Naive thymus-derived CD4-positive, alpha-beta T cell (primary cell): ENCODE measurements at regions of chr17 and their contacts with region 1.

Region 1: DNA sequence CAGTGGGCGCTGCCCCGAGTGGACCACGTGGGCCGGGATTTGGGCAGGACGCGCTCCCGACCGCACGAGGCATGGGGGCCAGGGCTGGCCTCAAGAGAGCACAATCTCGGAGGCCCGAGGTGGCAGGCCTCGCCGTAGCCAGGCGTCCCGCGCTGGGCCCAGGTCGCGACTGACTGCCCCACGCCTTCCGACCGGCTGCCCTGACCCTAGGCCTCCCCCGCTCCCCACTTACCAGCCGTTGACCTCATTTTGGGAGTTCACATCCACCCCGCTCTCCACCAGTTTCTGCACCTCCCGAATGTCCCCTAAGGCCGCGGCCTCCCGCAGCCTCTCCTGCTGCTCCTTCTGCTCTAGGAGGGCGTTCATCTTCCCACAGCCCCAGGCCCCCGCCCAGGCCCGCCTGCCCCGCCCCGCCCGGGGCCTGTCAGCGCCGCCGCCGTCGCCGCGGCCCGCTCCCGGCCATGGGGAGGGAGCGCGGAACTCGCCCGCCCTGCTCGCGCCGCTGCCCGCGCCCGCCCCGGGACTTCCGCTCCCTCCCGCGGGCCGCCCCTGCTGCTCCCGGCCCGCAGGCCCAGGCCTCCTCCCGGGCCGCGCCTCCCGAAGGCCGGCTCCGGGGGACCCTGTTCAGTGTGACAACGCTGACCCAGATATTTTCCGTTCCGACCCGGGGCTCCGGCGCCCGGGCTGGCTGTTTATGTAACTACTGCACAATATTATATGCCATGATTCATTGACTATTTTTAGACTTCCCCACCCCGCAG is at the start of gene ANKRD40:
- DNase-seq: peak; percentile 87 to 95 (median 91)
- ATAC-seq: peak; percentile 94
- H3K4me3 ChIP-seq: peak within 1 kb of the TSS; percentile 79
- H3K4me3 Mint-ChIP-seq: peak within 1 kb of the TSS; percentile 88 to 97 (median 93)
- H3K27ac ChIP-seq: peak within 1 kb of the TSS; percentile 88
- H3K27ac Mint-ChIP-seq: peak within 1 kb of the TSS; percentile 93 to 99 (median 97)
- H3K4me1 ChIP-seq: peaks cover 13 to 20% of the 10 kb centered on the region in 2 donors
- H3K4me1 Mint-ChIP-seq: peaks cover 23 to 68% (median 47%) of the 10 kb centered on the region in 7 donors
- H3K27me3 ChIP-seq: no peaks in the 10 kb centered on the region
- H3K27me3 Mint-ChIP-seq: peaks cover 0 to 2% (median 0%) of the 10 kb centered on the region in 5 donors
- total RNA-seq, gene ANKRD40: 27.4 to 37.2 (median 33.4) TPM

Region 2: DNA sequence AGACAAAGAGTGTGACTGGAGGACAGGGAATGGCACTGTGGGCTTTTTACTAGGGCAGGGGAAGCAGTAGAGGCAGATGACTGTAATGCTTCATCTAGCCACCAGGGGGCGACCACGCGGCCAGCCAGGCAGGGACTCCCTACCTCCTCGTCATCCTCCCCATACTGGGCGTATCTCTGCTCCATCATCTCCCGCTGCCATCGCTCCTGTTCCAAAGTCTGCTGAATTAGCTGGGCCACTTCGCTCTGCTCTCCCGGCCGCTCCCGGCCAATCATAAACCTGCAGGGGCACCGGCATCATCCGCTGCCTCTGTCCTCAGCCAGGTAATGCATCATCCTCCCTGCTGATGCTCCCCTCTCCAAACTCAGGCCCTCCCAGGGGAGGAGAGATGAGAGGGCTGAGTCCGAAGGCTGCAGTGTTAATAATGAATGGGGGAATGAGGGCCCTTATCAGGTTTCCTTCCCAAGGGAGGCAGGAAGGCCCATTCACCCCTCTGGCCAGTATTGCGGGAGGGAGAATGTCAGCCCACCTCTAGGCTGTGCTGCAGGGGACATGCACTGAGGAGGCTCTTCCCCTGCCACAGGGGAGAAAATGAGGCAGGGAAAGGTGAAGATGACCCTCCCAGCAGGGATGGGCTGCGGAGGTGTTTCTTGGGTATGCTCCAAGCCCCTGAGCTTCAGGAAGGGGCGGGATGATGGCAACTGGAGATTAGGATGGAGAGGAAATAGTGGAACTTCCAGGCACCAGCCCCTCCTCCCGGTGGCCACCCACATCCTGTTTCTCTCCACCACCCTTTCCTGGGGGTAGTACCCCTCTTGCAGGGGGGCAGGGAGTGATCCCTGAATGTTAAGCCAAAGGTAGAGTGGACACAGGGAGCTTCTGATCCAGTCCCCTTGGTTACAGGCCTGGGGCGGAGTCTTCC is 567.3 kb before region 1 on chr17:
- CTCF ChIA-PET with region 1: no interaction called
- POLR2A ChIA-PET with region 1: no interaction called
- intact Hi-C with region 1: loop called in 1 of 2 experiments (anchors 10 kb)
- DNase-seq: peak; percentile 68 to 88 (median 77)
- ATAC-seq: peak; percentile 93
- H3K4me3 ChIP-seq: peak overlapping the region; percentile 55
- H3K4me3 Mint-ChIP-seq: peak overlapping the region; percentile 33 to 91 (median 72)
- H3K27ac ChIP-seq: peak overlapping the region; percentile 42
- H3K27ac Mint-ChIP-seq: peak overlapping the region in 8 of 9 donors; percentile 56 to 92 (median 80)
- H3K4me1 ChIP-seq: peaks cover 37 to 42% of the 10 kb centered on the region in 2 donors
- H3K4me1 Mint-ChIP-seq: peaks cover 49 to 80% (median 63%) of the 10 kb centered on the region in 7 donors
- H3K27me3 ChIP-seq: no peaks in the 10 kb centered on the region
- H3K27me3 Mint-ChIP-seq: no peaks in the 10 kb centered on the region

Region 3: GRCh38 chr17:50397111-50397918 is 310.2 kb before region 1 on chr17 and contains the start of gene LRRC59:
- CTCF ChIA-PET with region 1: no interaction called
- POLR2A ChIA-PET with region 1: no interaction called
- intact Hi-C with region 1: loop called in 1 of 2 experiments (anchors 10 kb)
- DNase-seq: peak; percentile 86 to 99 (median 93)
- ATAC-seq: peak; percentile 100
- H3K4me3 ChIP-seq: peak within 1 kb of the TSS; percentile 69
- H3K4me3 Mint-ChIP-seq: peak within 1 kb of the TSS; percentile 78 to 99 (median 92)
- H3K27ac ChIP-seq: peak within 1 kb of the TSS; percentile 93
- H3K27ac Mint-ChIP-seq: peak within 1 kb of the TSS; percentile 83 to 96 (median 93)
- H3K4me1 ChIP-seq: peaks cover 15 to 18% of the 10 kb centered on the region in 2 donors
- H3K4me1 Mint-ChIP-seq: peaks cover 21 to 47% (median 34%) of the 10 kb centered on the region in 7 donors
- H3K27me3 ChIP-seq: no peaks in the 10 kb centered on the region
- H3K27me3 Mint-ChIP-seq: no peaks in the 10 kb centered on the region
- total RNA-seq, gene LRRC59: 27.6 to 67.1 (median 42.4) TPM

Region 4: DNA sequence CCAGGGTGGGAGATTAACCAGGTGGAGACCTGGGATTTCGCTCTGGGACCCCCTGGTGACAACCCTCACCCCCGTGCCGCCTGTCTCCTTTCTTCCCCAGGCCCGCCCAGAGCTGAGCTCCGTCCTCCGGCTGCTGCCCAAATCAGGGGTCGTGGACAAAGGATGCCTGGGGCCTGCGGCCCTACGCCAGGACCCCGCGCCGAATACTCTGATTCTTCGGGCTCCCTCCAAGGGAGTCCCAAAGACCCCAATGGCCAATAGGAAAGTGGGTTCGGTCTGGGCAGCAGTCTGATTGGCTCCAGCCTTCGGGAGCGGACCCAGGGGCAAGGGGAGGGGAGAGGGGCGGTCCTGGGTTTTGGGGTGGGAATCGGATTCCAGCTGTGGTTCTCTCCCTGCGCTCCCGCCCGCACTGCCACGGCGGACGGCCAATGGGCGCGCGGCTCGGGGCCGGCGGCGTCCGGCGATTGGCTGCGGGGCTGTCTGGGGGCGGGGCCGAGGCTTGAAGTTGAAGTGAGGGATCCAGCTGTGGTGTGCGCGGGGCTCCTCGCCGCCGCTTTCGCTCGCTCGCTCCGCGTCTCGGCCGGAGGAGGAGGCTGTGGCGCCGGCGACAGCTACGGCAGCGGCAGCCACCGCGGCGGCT is 147.2 kb before region 1 on chr17 and contains the start of gene CACNA1G:
- CTCF ChIA-PET with region 1: no interaction called
- POLR2A ChIA-PET with region 1: no interaction called
- intact Hi-C with region 1: loop called (anchors 5 kb)
- DNase-seq: peak; percentile 72 to 93 (median 81)
- ATAC-seq: peak; percentile 94
- H3K4me3 ChIP-seq: peak within 1 kb of the TSS; percentile 73
- H3K4me3 Mint-ChIP-seq: peak within 1 kb of the TSS; percentile 68 to 87 (median 80)
- H3K27ac ChIP-seq: no peak within 1 kb of the TSS
- H3K27ac Mint-ChIP-seq: peak within 1 kb of the TSS in 3 of 9 donors; percentile 13 to 28 (median 25)
- H3K4me1 ChIP-seq: peaks cover 20 to 23% of the 10 kb centered on the region in 2 donors
- H3K4me1 Mint-ChIP-seq: peaks cover 12 to 37% (median 21%) of the 10 kb centered on the region in 7 donors
- H3K27me3 ChIP-seq: peaks cover 19 to 27% of the 10 kb centered on the region in 2 donors
- H3K27me3 Mint-ChIP-seq: peaks cover 38 to 71% (median 46%) of the 10 kb centered on the region in 5 donors
- total RNA-seq, gene CACNA1G: not detected

Region 5: DNA sequence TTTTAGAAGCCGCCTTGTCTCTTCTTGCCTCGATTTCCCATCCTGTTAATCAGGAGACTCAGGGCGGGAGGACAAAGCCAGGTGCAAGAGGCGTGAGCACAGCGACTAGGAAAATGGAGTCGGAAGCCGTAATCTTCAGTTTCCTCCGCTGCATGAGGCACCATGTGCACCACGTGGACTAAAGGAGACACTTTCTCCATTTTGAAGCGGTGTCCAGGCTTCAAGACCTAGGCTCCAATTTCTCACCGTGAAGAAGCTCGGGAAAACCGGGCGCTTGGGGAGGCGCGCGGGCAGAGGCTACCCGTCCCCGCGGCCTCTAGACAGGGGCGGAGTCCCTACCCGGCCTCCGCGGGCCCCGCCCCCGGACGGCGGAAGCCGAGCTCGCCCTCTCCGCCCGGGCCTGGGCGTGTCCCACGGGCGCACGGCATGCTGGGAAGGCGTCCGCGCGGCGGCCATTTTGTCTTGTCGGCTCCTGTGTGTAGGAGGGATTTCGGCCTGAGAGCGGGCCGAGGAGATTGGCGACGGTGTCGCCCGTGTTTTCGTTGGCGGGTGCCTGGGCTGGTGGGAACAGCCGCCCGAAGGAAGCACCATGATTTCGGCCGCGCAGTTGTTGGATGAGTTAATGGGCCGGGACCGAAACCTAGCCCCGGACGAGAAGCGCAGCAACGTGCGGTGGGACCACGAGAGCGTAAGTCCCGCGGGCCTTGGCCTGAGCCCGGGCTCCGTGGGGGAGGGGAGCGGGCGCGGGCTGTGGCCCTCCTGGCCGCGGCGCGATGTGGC is 11.9 kb after region 1 on chr17 and contains the start of gene LUC7L3:
- CTCF ChIA-PET with region 1: interaction called, 5 read pairs
- POLR2A ChIA-PET with region 1: interaction called, 58 read pairs
- intact Hi-C with region 1: loop called (anchors 1 kb)
- DNase-seq: peak; percentile 88 to 97 (median 95)
- ATAC-seq: peak; percentile 98
- H3K4me3 ChIP-seq: peak within 1 kb of the TSS; percentile 92
- H3K4me3 Mint-ChIP-seq: peak within 1 kb of the TSS; percentile 84 to 99 (median 98)
- H3K27ac ChIP-seq: peak within 1 kb of the TSS; percentile 95
- H3K27ac Mint-ChIP-seq: peak within 1 kb of the TSS; percentile 93 to 100 (median 99)
- H3K4me1 ChIP-seq: peaks cover 22 to 26% of the 10 kb centered on the region in 2 donors
- H3K4me1 Mint-ChIP-seq: peaks cover 19 to 37% (median 27%) of the 10 kb centered on the region in 7 donors
- H3K27me3 ChIP-seq: no peaks in the 10 kb centered on the region
- H3K27me3 Mint-ChIP-seq: no peaks in the 10 kb centered on the region
- total RNA-seq, gene LUC7L3: 131 to 331 (median 149) TPM